MCF 10A (cell line): ENCODE measurements at regions of chr12 and their contacts with region 1.

Region 1: GRCh38 chr12:7970475-7971252 is 34.7 kb upstream of the SLC2A3 start:
- DNase-seq: peak; percentile 87
- H3K4me3 Mint-ChIP-seq: peak overlapping the region; percentile 84
- H3K27ac Mint-ChIP-seq: peak overlapping the region; percentile 1
- H3K4me1 Mint-ChIP-seq: peaks cover 21% of the 10 kb centered on the region
- H3K27me3 Mint-ChIP-seq: no peaks in the 10 kb centered on the region
- CTCF ChIP-seq: no peak

Region 2: GRCh38 chr12:7959701-7960121 is 11.0 kb before region 1 on chr12:
- CTCF ChIA-PET with region 1: interaction called, 6 read pairs
- POLR2A ChIA-PET with region 1: interaction called, 14 read pairs
- intact Hi-C with region 1: no loop called
- DNase-seq: peak; percentile 96
- H3K4me3 Mint-ChIP-seq: peak overlapping the region; percentile 60
- H3K27ac Mint-ChIP-seq: peak overlapping the region; percentile 92
- H3K4me1 Mint-ChIP-seq: peaks cover 27% of the 10 kb centered on the region
- H3K27me3 Mint-ChIP-seq: no peaks in the 10 kb centered on the region
- CTCF ChIP-seq: no peak